ENCODE measurements at regions of chr15 and their contacts with region 1.

Region 1: DNA sequence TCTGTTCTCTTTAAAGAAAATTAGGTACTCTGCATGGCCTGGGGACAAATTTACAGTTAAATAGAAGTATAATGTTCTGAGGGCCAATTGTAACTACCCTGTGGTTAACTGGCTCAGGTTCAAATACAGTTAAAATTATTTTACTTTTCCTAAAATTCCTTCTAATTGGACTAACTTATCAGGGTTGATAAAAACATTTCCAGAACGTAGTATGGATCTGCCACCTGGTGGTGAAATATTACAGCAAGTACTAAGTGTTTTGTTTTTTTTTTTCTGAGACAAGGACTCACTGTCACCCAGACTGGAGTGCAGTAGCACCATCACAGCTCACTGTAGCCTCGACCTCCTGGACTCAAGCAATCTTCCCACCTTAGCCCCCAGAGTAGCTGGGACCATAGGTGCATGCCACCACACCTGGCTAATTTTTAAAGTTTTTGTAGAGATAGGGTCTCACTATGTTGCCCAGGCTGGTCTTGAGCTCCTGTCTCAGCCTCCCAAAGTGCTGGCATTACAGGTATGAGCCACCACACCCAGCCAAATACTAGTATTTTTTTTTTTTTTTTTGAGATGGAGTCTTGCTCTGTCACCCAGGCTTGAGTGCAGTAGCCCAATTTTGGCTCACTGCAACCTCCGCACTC is 29.2 kb downstream of the NEO1 start:
- DNase-seq: no peak
- H3K4me3 ChIP-seq: no peak overlapping the region
- CTCF ChIP-seq: peak; percentile 42

Region 2: DNA sequence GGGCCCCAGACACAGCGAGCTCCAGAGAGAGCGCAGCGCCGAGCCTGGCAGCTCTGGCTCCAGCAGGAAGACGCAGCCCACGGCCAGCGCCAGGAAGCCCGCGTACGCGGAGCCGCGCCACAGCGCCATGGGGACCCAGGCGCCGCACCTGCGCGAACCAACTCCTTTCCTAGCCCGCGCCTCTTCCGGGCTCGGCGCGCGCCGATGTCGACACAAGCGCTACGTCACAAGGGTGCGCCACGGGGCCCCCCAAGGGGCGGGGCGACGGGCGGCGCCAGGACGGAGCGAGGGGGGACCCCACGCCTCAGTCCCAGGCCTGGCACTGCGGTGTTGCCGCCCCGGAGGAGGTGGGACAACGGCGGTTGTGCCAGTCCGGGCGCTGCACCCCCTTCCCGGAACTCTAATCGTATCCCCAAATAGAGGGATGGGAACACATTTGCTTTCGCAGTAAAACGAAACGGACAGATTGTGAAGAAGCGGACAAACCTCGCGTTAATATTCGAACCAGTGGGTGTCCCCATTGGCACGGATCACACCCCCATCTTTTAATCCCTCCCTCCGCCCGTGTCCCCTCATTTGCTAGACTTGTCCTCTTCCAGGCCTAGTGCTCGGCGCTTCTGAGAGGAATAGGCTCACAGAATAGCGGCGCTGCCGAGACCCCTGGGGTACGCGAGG is 297.7 kb before region 1 on chr15 and contains the start of gene ADPGK:
- CTCF ChIA-PET with region 1: interaction called, 28 read pairs
- POLR2A ChIA-PET with region 1: interaction called, 3 read pairs
- DNase-seq: peak; percentile 57
- H3K4me3 ChIP-seq: peak within 1 kb of the TSS; percentile 92
- CTCF ChIP-seq: no peak

Region 3: DNA sequence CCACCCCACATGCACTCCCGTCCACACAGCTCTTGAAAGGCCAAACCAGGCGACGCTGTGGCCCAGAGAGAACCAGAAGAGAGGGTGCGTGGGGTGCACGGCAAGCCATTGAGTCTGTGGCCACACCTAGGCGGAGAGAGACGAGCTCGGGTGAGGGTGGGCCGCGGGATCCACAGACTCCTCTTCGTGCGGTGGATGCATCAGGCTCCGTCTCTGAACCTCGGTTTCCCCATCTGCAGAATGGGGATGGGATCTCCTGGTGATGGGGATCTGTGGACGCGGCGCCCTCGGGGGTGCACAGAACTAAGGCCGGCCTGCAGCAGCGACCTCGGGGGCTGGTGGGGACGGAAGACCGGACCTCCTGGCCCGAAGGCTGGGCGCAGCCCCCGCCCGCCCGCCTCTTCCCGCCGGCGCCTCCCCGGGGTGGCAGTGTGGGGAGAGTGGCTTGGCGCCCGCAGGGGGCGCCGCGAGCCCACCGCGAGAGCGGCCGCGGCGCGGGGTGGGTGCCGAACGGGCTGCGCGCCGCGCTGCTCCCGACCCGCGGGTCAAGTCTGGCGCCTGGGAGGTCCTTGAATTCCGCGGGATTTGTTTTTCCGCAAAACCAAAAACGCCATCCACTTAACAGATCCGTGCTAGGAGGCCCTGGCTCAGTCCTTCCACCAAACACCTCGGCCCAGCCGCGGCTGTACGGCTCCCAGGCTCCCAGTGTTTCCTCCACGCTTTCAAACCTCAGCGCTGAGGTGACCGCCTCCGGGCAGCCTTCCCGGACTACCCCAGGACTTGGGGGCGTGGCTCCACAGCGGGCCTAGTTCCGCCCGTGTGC is 284.7 kb before region 1 on chr15:
- CTCF ChIA-PET with region 1: interaction called, 34 read pairs
- POLR2A ChIA-PET with region 1: no interaction called
- DNase-seq: no peak
- H3K4me3 ChIP-seq: peak overlapping the region; percentile 59
- CTCF ChIP-seq: peak; percentile 37

Measured in AG04449 (cell line).